Head of caudate nucleus (tissue), 42 donors: ENCODE measurements at regions of chr2 and their contacts with region 1.

Region 1: GRCh38 chr2:226799181-226799975 is at the start of gene IRS1:
- DNase-seq: peak in 39 of 42 donors; percentile 55 to 85 (median 69)

Region 2: DNA sequence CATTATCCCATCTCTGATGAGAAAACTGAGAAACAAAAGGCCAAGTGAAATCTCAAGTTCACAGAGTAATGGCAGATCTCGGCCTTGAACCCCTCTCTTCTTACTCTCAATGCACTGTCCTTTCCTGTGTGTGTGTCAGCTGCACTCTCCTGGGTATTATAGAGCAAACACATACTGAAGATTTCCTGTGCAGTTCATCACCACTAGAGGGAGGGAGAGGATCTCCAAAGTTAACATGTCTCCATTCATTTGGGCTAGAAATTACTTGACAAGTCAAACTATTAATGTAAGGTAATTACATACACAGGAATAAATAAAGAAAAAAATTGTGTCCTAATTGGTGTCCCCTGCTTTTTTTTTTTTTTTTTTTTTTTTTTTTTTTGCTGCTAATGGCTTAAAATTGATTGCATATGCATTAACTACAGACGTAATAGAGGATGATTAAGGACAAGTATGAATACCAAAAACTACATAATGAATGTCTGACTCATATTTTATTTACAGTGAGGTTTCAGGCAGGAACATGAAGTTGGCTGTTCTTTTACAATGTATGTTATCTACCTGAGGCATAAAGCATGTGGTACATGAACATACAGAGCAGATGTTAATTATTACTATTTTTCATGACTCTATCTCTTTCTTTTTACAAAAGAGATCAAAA is 1130.6 kb before region 1 on chr2:
- intact Hi-C with region 1: loop called (anchors 5 kb)
- DNase-seq: peak in 14 of 42 donors; percentile 6 to 62 (median 35)

Region 3: GRCh38 chr2:226701052-226701451 is 98.3 kb before region 1 on chr2:
- intact Hi-C with region 1: no loop called
- DNase-seq: no peak

Region 4: GRCh38 chr2:226832061-226832460 is 32.7 kb after region 1 on chr2:
- intact Hi-C with region 1: loop called (anchors 5 kb)
- DNase-seq: no peak